GM12878 (cell line): ENCODE measurements at regions of chr2 and their contacts with region 1.

Region 1: DNA sequence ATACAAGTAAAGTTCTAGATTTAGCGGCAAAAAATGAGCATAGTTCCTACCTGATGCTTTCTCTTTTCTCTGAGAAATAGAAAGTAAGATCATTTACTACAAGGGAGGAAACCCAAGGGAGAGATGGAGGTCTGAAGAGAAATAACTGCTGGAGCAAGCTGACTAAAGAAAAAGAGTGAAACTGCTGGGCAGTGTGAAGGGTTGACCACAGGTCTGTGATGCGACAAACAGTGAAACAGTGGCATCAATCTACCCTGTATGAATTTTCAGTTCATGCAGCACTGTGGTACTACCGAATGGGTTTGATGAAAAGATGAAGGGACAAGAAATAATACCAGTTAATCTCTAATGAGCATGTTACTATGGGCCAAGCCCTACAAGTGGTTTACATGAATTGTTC is 52.2 kb downstream of the CUL3 start:
- DNase-seq: no peak
- ATAC-seq: peak; percentile 77
- H3K4me3 ChIP-seq: no peak overlapping the region
- H3K27ac ChIP-seq: no peak overlapping the region
- H3K4me1 ChIP-seq: peaks cover 6% of the 10 kb centered on the region
- H3K27me3 ChIP-seq: no peaks in the 10 kb centered on the region
- CTCF ChIP-seq: no peak
- EP300 ChIP-seq: no peak
- POLR2A ChIP-seq: no peak
- RAD21 ChIP-seq: no peak

Region 2: GRCh38 chr2:224369028-224369632 is 163.8 kb before region 1 on chr2:
- CTCF ChIA-PET with region 1: no interaction called
- POLR2A ChIA-PET with region 1: no interaction called
- RAD21 ChIA-PET with region 1: no interaction called
- SMC1A ChIA-PET with region 1: no interaction called
- in situ Hi-C with region 1: no loop called
- intact Hi-C with region 1: no loop called
- DNase-seq: no peak
- ATAC-seq: peak; percentile 78
- H3K4me3 ChIP-seq: no peak overlapping the region
- H3K27ac ChIP-seq: no peak overlapping the region
- H3K4me1 ChIP-seq: no peaks in the 10 kb centered on the region
- H3K27me3 ChIP-seq: no peaks in the 10 kb centered on the region
- CTCF ChIP-seq: peak; percentile 39 to 61 (median 48); a peak in 5 of 6 replicates
- EP300 ChIP-seq: no peak
- POLR2A ChIP-seq: no peak
- RAD21 ChIP-seq: peak; percentile 39

Region 3: GRCh38 chr2:224545884-224546644 is 13.1 kb after region 1 on chr2:
- CTCF ChIA-PET with region 1: interaction called, 5 read pairs
- POLR2A ChIA-PET with region 1: interaction called, 11 read pairs
- RAD21 ChIA-PET with region 1: interaction called, 4 read pairs
- SMC1A ChIA-PET with region 1: interaction called, 10 read pairs
- in situ Hi-C with region 1: no loop called
- intact Hi-C with region 1: no loop called
- DNase-seq: no peak
- ATAC-seq: peak; percentile 83
- H3K4me3 ChIP-seq: no peak overlapping the region
- H3K27ac ChIP-seq: no peak overlapping the region; the same call in 1 of the 2 replicates
- H3K4me1 ChIP-seq: peaks cover 3% of the 10 kb centered on the region; the same call in 1 of the 2 replicates
- H3K27me3 ChIP-seq: no peaks in the 10 kb centered on the region
- CTCF ChIP-seq: no peak
- EP300 ChIP-seq: peak in 1 of 2 experiments; percentile 26; a peak in 1 of 4 replicates
- POLR2A ChIP-seq: no peak
- RAD21 ChIP-seq: no peak